Posterior vena cava (tissue), 2 donors: ENCODE measurements at regions of chr2 and their contacts with region 1.

Region 1: DNA sequence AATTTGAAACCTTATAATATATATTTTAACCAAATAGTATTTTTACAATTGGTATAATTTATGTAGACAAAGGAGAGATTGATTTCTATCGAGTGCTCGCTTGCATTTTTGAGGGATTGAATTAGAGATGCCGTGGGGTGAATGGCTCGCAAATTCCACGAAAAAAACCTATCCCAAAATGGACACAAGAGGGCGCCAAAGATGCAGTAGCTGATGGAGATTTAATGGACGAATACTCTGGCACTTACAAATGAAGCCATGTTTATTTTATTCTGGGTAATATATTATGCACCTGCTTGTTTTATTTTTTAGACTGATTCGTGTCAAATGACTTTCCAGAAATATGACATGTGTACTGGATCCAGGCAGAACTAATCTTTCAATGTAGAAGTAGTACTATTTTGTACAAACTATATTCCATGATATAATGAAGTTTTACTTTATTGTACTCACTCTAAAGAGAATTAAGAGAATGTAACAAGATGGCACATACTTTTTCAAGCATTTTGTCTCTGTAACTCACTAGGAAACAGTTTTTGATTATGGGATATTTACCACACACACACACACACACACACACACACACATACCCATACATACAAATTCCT is 505.4 kb downstream of the PLCL1 start:
- DNase-seq: no peak

Region 2: GRCh38 chr2:198405311-198405710 is 95.5 kb after region 1 on chr2:
- intact Hi-C with region 1: no loop called
- DNase-seq: no peak

Region 3: DNA sequence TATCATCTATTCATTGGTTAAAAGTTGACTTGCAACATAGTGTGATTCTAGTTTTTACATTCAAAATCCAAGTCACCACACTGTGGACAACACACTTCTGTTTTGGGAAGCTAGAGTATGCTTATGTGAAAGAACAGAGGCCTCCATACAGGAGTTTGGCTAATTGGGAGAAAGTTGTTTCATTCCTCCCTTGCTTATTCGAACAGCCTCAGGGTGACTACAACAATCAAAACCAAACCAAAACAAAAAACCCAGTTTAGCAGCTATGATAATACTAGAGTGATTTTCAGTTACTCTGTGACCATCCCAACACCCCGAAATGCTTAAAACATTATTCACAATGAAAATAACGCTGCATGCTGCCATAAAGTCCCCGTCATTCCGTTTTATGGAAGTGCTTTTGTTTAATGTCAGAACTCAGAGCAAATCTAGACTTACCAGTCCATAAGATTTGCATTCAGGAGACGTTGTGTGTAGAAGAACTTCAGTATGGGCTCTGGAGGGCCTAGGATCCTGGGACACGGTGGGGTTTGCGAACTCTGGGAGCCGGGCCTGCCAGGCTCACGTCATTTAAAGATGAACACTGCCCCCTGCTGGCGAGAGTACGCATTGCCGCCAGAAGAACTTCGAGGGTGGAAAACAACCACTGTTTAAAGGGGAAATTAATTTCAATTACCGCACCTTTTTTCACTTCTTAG is 1429.8 kb after region 1 on chr2:
- intact Hi-C with region 1: loop called in 1 of 2 experiments (anchors 10 kb)
- DNase-seq: peak; percentile 91